Prostate gland (tissue), 2 donors: ENCODE measurements at regions of chr1 and their contacts with region 1.

Region 1: GRCh38 chr1:203361945-203362719 is 11.2 kb upstream of the FMOD start:
- DNase-seq: no peak
- H3K4me3 ChIP-seq: no peak overlapping the region
- H3K27ac ChIP-seq: no peak overlapping the region
- H3K4me1 ChIP-seq: no peaks in the 10 kb centered on the region
- H3K27me3 ChIP-seq: no peaks in the 10 kb centered on the region
- CTCF ChIP-seq: no peak
- POLR2A ChIP-seq: no peak

Region 2: GRCh38 chr1:203349773-203350524 is 12.2 kb before region 1 on chr1:
- intact Hi-C with region 1: loop called (anchors 2 kb)
- DNase-seq: no peak
- H3K4me3 ChIP-seq: peak overlapping the region in 1 of 2 donors; percentile 27
- H3K27ac ChIP-seq: peak overlapping the region; percentile 54 to 71
- H3K4me1 ChIP-seq: no peaks in the 10 kb centered on the region
- H3K27me3 ChIP-seq: no peaks in the 10 kb centered on the region
- CTCF ChIP-seq: no peak
- POLR2A ChIP-seq: no peak